ENCODE measurements at regions of chr11 and their contacts with region 1.

Region 1: GRCh38 chr11:35040221-35040942 is 98.6 kb upstream of the CD44 start:
- DNase-seq: peak; percentile 45 to 50
- ATAC-seq: peak; percentile 69 to 80
- H3K4me3 ChIP-seq: no peak overlapping the region
- H3K27ac ChIP-seq: peak overlapping the region; percentile 53 to 74 (median 70)
- H3K4me1 ChIP-seq: peaks cover 26 to 30% of the 10 kb centered on the region in 2 donors
- H3K27me3 ChIP-seq: no peaks in the 10 kb centered on the region
- CTCF ChIP-seq: no peak
- POLR2A ChIP-seq: no peak

Region 2: GRCh38 chr11:34855021-34855753 is 185.2 kb before region 1 on chr11:
- in situ Hi-C with region 1: no loop called
- intact Hi-C with region 1: no loop called
- DNase-seq: no peak
- ATAC-seq: peak in 1 of 2 donors; percentile 30
- H3K4me3 ChIP-seq: no peak overlapping the region
- H3K27ac ChIP-seq: peak overlapping the region in 1 of 4 donors; percentile 38
- H3K4me1 ChIP-seq: peaks cover 15 to 28% of the 10 kb centered on the region in 2 donors
- H3K27me3 ChIP-seq: no peaks in the 10 kb centered on the region
- CTCF ChIP-seq: no peak
- POLR2A ChIP-seq: no peak

Region 3: GRCh38 chr11:34916015-34916842 is 124.2 kb before region 1 on chr11 and contains the starts of genes APIP and PDHX:
- in situ Hi-C with region 1: no loop called
- intact Hi-C with region 1: loop called (anchors 5 kb)
- DNase-seq: peak; percentile 97 to 99
- ATAC-seq: peak; percentile 86 to 92
- H3K4me3 ChIP-seq: peak within 1 kb of the TSS; percentile 86 to 93 (median 91)
- H3K27ac ChIP-seq: peak within 1 kb of the TSS; percentile 96 to 99 (median 97)
- H3K4me1 ChIP-seq: peaks cover 29 to 35% of the 10 kb centered on the region in 2 donors
- H3K27me3 ChIP-seq: no peaks in the 10 kb centered on the region
- CTCF ChIP-seq: peak in 1 of 5 experiments; percentile 6
- POLR2A ChIP-seq: peak; percentile 93 to 96
- total RNA-seq, gene APIP: 22.5 to 49.1 (median 31.5) TPM
- total RNA-seq, gene PDHX: 77.7 to 101 (median 87.3) TPM

Region 4: GRCh38 chr11:35066783-35067423 is 26.5 kb after region 1 on chr11:
- in situ Hi-C with region 1: no loop called
- intact Hi-C with region 1: no loop called
- DNase-seq: no peak
- ATAC-seq: no peak
- H3K4me3 ChIP-seq: no peak overlapping the region
- H3K27ac ChIP-seq: no peak overlapping the region
- H3K4me1 ChIP-seq: no peaks in the 10 kb centered on the region
- H3K27me3 ChIP-seq: no peaks in the 10 kb centered on the region
- CTCF ChIP-seq: no peak
- POLR2A ChIP-seq: no peak

Measured in gastrocnemius medialis (tissue), 4 donors.